ENCODE measurements at regions of chr1 and their contacts with region 1.

Region 1: DNA sequence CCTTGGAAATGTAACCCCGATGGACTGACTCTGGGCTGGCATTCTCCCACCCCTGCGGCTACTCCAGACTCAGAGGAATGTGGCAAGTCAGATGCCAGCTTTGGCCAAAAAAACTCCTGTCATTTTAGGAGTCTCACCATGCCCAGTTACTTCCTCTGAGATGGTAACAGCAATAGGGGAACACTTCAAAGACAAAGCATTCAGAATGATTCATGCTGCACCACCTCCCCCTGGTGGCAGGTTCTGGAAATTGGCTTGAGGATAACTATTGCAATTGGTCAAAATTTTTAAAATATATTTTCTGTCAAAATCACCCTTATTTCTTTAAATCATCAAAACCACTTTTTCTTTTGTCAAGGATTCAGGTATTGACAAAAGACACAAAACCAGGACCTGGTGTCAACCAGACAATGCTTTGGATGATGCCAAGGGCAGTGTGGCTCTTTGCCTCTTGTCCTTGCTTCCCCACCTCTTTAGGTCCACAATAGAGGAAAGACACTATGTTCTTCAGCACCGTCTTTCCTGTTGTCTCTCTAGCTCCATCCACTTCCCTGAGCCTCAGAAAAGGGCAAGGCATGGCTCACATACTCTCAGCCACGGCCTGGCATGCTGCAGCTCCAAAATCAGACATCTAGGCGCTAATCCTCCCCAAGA is 9.9 kb upstream of the CDCA8 start:
- DNase-seq: peak in 5 of 6 donors; percentile 19 to 81 (median 62)
- ATAC-seq: peak; percentile 64 to 90 (median 86)
- H3K4me3 ChIP-seq: no peak overlapping the region
- H3K27ac ChIP-seq: no peak overlapping the region
- H3K4me1 ChIP-seq: no peaks in the 10 kb centered on the region
- H3K27me3 ChIP-seq: no peaks in the 10 kb centered on the region
- CTCF ChIP-seq: peak; percentile 67 to 85 (median 81)

Region 2: GRCh38 chr1:37449936-37450335 is 232.5 kb before region 1 on chr1:
- intact Hi-C with region 1: loop called in 2 of 3 experiments (anchors 5 to 10 kb)
- DNase-seq: no peak
- ATAC-seq: no peak
- H3K4me3 ChIP-seq: no peak overlapping the region
- H3K27ac ChIP-seq: no peak overlapping the region
- H3K4me1 ChIP-seq: peaks cover 0 to under 1% (median 0%) of the 10 kb centered on the region in 3 donors
- H3K27me3 ChIP-seq: no peaks in the 10 kb centered on the region
- CTCF ChIP-seq: no peak

Region 3: DNA sequence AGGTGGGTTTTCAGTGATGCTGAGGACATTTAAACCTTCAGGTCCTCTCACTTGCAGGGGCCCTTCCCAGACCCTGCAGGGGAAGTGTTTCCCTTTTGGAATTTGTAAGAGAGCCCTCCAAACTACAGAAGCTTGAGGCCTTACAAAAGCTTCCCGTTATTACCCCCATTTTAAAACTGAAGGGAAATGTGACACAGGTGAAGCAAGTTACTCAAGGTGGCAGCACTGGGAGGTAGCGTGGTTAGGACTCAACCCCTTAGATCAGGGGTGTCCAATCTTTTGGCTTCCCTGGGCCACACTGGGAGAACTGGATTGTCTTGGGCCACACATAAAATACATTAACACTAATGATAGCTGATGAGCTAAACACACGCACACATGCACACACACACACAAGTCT is 223.9 kb before region 1 on chr1:
- intact Hi-C with region 1: loop called in 2 of 3 experiments (anchors 5 to 10 kb)
- DNase-seq: no peak
- ATAC-seq: no peak
- H3K4me3 ChIP-seq: no peak overlapping the region
- H3K27ac ChIP-seq: no peak overlapping the region
- H3K4me1 ChIP-seq: peaks cover 0 to 3% (median 0%) of the 10 kb centered on the region in 3 donors
- H3K27me3 ChIP-seq: no peaks in the 10 kb centered on the region
- CTCF ChIP-seq: no peak

Region 4: DNA sequence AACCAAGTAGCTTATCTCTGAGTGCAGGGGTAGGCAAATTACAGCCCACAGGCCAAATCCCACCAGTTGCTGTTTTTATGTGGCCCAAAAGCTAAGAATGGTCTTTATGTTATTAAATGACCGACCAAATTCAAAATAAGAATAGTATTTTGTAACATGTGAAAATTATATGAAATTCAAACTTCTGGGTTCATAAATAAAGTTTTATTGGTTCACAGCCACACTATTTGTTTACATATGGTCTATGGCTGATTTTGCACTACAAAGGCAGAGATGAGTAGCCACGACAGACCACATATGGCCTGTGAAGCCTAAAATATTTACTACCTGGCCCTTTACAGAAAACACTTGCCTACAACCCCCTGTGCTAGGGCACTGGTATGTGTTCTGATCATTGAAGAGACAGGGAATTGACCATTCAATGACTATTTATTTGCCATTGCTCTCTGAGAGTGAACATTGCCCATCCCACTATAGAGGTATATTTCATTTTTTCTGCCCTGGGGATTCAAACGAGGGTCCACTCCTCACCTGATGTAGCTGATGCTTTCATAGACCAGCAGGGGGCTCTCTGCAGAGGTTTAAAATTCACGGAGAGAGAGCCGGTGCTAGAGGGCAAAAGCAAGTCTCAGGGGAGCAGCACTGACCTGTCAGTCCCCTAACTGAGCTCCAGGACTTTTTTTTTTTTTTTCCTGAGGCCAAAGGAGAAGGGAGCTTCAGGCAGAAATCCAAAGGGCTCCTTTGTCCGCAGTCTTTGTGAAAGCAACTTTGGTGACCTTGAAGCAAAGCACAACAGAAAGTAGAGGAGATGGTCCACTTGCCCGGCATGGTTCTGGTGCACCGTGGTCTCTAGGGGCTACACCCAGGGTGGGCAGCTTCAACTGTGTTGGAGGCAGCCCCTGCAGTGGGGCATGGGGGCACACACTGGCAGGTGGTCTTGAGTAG is 79.4 kb before region 1 on chr1:
- intact Hi-C with region 1: loop called in 1 of 3 experiments (anchors 5 kb)
- DNase-seq: peak in 1 of 6 donors; percentile 28
- ATAC-seq: peak; percentile 48 to 82 (median 73)
- H3K4me3 ChIP-seq: no peak overlapping the region
- H3K27ac ChIP-seq: no peak overlapping the region
- H3K4me1 ChIP-seq: no peaks in the 10 kb centered on the region
- H3K27me3 ChIP-seq: no peaks in the 10 kb centered on the region
- CTCF ChIP-seq: peak; percentile 28 to 50 (median 46)

Measured in pancreas (tissue), 10 donors.